ENCODE measurements at regions of chr2 and their contacts with region 1.

Region 1: GRCh38 chr2:27890146-27890923 is at the starts of genes BABAM2 and RBKS:
- DNase-seq: peak; percentile 86 to 97 (median 93)
- ATAC-seq: peak; percentile 79
- H3K4me3 ChIP-seq: peak within 1 kb of the TSS; percentile 77 to 95
- H3K4me3 Mint-ChIP-seq: peak within 1 kb of the TSS; percentile 94
- H3K27ac ChIP-seq: peak within 1 kb of the TSS; percentile 98 to 100
- H3K27ac Mint-ChIP-seq: peak within 1 kb of the TSS; percentile 100
- H3K4me1 ChIP-seq: peaks cover 22% of the 10 kb centered on the region
- H3K4me1 Mint-ChIP-seq: peaks cover 58% of the 10 kb centered on the region
- H3K27me3 ChIP-seq: no peaks in the 10 kb centered on the region
- H3K27me3 Mint-ChIP-seq: peaks cover 2% of the 10 kb centered on the region
- CTCF ChIP-seq: no peak
- total RNA-seq, gene BABAM2: 26.3 to 33.1 TPM
- total RNA-seq, gene RBKS: 5.9 to 6.3 TPM

Region 2: GRCh38 chr2:27217217-27218121 is 672.9 kb before region 1 on chr2 and contains the start of gene CAD:
- CTCF ChIA-PET with region 1: no interaction called
- POLR2A ChIA-PET with region 1: no interaction called
- intact Hi-C with region 1: loop called in 1 of 2 experiments (anchors 10 kb)
- DNase-seq: peak; percentile 69 to 92 (median 85)
- ATAC-seq: peak; percentile 77
- H3K4me3 ChIP-seq: peak within 1 kb of the TSS; percentile 84
- H3K4me3 Mint-ChIP-seq: peak within 1 kb of the TSS; percentile 96
- H3K27ac ChIP-seq: peak within 1 kb of the TSS; percentile 66 to 78
- H3K27ac Mint-ChIP-seq: peak within 1 kb of the TSS; percentile 94
- H3K4me1 ChIP-seq: peaks cover 25% of the 10 kb centered on the region
- H3K4me1 Mint-ChIP-seq: peaks cover 45% of the 10 kb centered on the region
- H3K27me3 ChIP-seq: no peaks in the 10 kb centered on the region
- H3K27me3 Mint-ChIP-seq: no peaks in the 10 kb centered on the region
- CTCF ChIP-seq: no peak
- total RNA-seq, gene CAD: 24.7 to 31.4 TPM

Region 3: DNA sequence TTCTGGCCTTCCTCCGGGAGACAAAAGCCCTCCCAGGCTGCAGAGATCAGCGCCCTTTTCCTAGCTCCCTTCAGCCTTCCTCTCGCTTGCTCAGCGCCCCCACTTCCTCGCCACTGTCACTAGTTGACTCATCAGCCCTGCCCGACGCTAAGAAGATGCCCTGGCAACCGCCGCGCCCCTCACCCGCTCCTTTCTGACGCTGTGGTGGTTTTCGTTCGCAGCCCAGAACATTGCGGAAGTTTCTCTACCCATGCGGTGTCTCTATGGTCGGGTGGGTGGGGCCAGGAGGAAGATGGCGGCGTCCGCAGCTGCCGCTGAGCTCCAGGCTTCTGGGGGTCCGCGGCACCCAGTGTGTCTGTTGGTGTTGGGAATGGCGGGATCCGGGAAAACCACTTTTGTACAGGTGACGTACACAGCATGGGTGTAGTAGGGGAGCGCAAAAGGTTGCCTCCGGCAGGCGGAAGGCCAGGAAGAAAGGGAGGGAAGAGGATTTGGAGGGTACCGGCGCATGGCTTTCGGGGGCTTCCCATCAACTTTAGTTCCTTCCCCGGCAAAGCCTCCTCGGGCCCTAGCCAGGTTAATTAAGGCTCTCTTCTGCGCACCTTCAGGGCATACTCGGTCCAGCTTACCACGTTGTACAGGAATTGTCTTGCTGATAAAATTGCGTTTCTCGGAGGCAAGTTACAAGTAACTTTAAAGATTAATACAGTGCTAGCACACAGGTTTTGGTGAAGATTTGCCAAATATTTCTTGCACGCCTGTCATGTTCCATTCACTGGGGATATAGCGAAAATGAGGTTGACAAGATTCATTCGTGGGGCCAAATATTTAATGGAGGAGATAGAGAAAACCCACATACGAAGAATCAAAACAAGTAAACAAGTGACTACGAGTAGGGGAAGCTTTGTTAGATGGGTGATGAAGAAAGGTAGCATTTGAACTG is 261.3 kb before region 1 on chr2 and contains the starts of genes CCDC121 and GPN1:
- CTCF ChIA-PET with region 1: no interaction called
- POLR2A ChIA-PET with region 1: no interaction called
- intact Hi-C with region 1: loop called in 1 of 2 experiments (anchors 2 kb)
- DNase-seq: peak; percentile 88 to 97 (median 95)
- ATAC-seq: peak; percentile 98
- H3K4me3 ChIP-seq: peak within 1 kb of the TSS; percentile 94 to 98
- H3K4me3 Mint-ChIP-seq: no peak within 1 kb of the TSS
- H3K27ac ChIP-seq: peak within 1 kb of the TSS; percentile 84 to 91
- H3K27ac Mint-ChIP-seq: peak within 1 kb of the TSS; percentile 46
- H3K4me1 ChIP-seq: peaks cover 18% of the 10 kb centered on the region
- H3K4me1 Mint-ChIP-seq: peaks cover 20% of the 10 kb centered on the region
- H3K27me3 ChIP-seq: no peaks in the 10 kb centered on the region
- H3K27me3 Mint-ChIP-seq: no peaks in the 10 kb centered on the region
- CTCF ChIP-seq: no peak
- total RNA-seq, gene CCDC121: 0.92 to 1.4 TPM
- total RNA-seq, gene GPN1: 40.6 to 41.7 TPM

Region 4: DNA sequence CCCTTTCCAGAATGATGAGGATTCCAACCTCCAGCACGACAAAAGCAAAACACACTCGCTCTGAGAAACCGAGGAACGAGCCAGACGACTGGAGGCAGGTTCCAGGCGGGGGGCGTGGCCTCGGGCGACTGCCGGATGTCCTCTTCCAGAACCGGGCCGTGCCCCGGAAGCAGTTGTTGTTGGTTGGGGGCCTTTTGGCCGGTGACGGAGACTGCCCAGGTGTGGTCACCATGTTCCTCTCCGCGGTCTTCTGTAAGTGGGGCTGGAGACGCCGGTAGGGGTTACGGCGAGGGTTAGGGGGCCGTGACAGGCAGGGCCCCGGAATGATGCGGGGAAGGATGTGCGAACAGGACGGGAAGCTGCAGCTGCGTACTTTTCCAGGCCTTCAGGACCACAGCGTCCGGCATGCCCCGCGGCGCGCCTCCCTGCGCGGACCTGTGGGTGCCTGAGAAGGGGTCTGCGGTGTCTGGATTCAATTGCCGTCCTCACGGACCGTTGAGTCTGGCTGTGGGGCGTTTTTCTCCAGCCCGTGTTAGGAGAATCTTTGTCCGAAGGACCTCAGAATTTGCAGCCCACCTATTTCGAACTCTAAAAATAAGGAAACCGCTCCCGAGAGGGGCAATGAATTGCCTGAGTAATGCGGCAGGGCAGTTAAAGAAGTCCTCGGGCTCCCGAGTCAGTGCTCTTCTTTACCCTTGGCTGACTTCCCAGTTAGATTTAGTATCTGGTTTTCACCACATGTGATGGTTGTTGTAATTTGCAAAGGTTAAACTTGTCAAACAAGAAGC is 118.6 kb before region 1 on chr2 and contains the start of gene MRPL33:
- CTCF ChIA-PET with region 1: no interaction called
- POLR2A ChIA-PET with region 1: interaction called, 6 read pairs
- intact Hi-C with region 1: loop called (anchors 1 kb)
- DNase-seq: peak; percentile 82 to 94 (median 92)
- ATAC-seq: peak; percentile 89
- H3K4me3 ChIP-seq: peak within 1 kb of the TSS; percentile 93 to 99
- H3K4me3 Mint-ChIP-seq: peak within 1 kb of the TSS; percentile 100
- H3K27ac ChIP-seq: peak within 1 kb of the TSS; percentile 93 to 96
- H3K27ac Mint-ChIP-seq: peak within 1 kb of the TSS; percentile 100
- H3K4me1 ChIP-seq: peaks cover 27% of the 10 kb centered on the region
- H3K4me1 Mint-ChIP-seq: peaks cover 51% of the 10 kb centered on the region
- H3K27me3 ChIP-seq: no peaks in the 10 kb centered on the region
- H3K27me3 Mint-ChIP-seq: peaks cover 4% of the 10 kb centered on the region
- CTCF ChIP-seq: no peak
- total RNA-seq, gene MRPL33: 35.8 to 39.0 TPM

Region 5: DNA sequence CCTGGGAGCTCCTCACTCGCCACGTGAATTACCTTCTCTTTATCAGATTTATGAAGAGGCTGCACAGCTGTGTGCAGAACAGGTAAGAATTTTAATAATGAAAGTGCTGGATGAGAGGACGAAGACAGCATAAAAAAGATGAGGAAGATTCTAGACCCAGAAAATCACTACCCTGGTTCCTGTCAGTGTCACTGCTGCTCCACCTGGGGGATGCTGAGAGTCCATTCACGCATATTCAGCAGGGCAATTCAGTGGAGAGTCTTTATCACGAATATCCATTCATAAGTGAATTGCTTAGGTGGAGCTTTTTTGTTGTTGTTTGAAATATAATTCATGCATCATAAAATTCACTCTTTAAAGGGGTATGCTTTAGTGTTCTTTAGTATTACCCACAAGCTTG is 66.8 kb before region 1 on chr2:
- CTCF ChIA-PET with region 1: no interaction called
- POLR2A ChIA-PET with region 1: no interaction called
- intact Hi-C with region 1: no loop called
- DNase-seq: no peak
- ATAC-seq: no peak
- H3K4me3 ChIP-seq: no peak overlapping the region
- H3K4me3 Mint-ChIP-seq: no peak overlapping the region
- H3K27ac ChIP-seq: no peak overlapping the region
- H3K27ac Mint-ChIP-seq: no peak overlapping the region
- H3K4me1 ChIP-seq: no peaks in the 10 kb centered on the region
- H3K4me1 Mint-ChIP-seq: no peaks in the 10 kb centered on the region
- H3K27me3 ChIP-seq: no peaks in the 10 kb centered on the region
- H3K27me3 Mint-ChIP-seq: no peaks in the 10 kb centered on the region
- CTCF ChIP-seq: no peak

Region 6: DNA sequence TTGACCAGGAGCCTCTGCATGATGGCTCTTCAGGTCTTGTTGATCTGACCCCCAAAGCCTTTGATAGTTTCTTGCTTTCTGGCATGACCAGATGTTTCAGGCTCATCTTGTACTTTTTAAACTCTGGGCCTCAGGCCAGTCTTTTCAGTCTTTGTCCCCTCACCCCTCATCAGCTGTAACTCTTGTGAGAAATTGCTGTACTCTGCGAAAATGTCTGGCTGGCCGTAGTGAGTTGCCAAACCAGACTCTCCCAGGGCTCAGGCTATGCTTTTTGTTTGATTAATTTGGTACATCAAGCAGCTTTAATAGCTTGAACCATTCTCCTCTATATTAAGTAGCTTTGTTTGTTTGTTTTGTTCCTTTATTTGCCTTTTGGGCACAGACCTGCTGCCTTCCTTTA is 76.1 kb after region 1 on chr2:
- CTCF ChIA-PET with region 1: no interaction called
- POLR2A ChIA-PET with region 1: interaction called, 3 read pairs
- intact Hi-C with region 1: loop called (anchors 2 to 5 kb)
- DNase-seq: no peak
- ATAC-seq: no peak
- H3K4me3 ChIP-seq: no peak overlapping the region
- H3K4me3 Mint-ChIP-seq: peak overlapping the region; percentile 9
- H3K27ac ChIP-seq: no peak overlapping the region
- H3K27ac Mint-ChIP-seq: peak overlapping the region; percentile 75
- H3K4me1 ChIP-seq: peaks cover 18% of the 10 kb centered on the region
- H3K4me1 Mint-ChIP-seq: peaks cover 31% of the 10 kb centered on the region
- H3K27me3 ChIP-seq: no peaks in the 10 kb centered on the region
- H3K27me3 Mint-ChIP-seq: no peaks in the 10 kb centered on the region
- CTCF ChIP-seq: no peak

Region 7: DNA sequence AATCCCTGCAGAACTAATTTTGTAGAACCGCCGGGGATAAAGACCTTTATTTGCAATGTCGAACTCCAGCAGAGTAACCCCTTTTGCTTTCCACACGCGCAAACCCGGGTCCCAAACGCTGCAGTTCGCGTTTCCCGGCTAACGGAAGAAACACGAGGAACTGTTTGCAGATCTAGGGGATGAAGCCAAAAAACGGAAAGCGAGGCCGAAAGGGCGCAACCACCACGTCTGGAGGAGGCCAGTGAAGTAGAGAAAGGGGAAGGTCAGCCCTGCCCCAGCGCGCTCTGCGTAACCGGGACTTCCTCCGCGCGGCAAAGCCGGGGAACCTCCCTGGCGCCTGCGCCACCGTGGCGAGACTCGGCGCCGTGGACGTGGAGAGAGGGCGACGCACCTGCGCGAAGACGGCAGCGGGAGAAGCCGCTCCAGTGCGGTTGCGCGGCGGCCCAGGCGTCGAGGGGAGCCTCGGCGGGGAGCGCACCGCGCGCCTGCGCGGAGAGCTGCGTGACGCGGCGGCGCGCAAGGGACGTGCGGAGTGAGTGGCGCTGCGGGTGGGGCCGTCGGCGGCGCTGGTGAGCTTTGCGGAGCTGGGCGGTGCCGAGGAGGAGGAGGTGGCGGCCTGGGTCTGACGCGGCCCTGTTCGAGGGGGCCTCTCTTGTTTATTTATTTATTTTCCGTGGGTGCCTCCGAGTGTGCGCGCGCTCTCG is 861.1 kb after region 1 on chr2 and contains the start of gene PPP1CB:
- CTCF ChIA-PET with region 1: no interaction called
- POLR2A ChIA-PET with region 1: no interaction called
- intact Hi-C with region 1: loop called in 1 of 2 experiments (anchors 2 kb)
- DNase-seq: peak; percentile 93 to 100 (median 95)
- ATAC-seq: peak; percentile 85
- H3K4me3 ChIP-seq: peak within 1 kb of the TSS; percentile 63 to 88
- H3K4me3 Mint-ChIP-seq: peak within 1 kb of the TSS; percentile 93
- H3K27ac ChIP-seq: peak within 1 kb of the TSS; percentile 86 to 97
- H3K27ac Mint-ChIP-seq: peak within 1 kb of the TSS; percentile 96
- H3K4me1 ChIP-seq: peaks cover 46% of the 10 kb centered on the region
- H3K4me1 Mint-ChIP-seq: peaks cover 65% of the 10 kb centered on the region
- H3K27me3 ChIP-seq: no peaks in the 10 kb centered on the region
- H3K27me3 Mint-ChIP-seq: no peaks in the 10 kb centered on the region
- CTCF ChIP-seq: no peak
- total RNA-seq, gene PPP1CB: 331 to 334 TPM

Region 8: GRCh38 chr2:29014811-29015421 is 1124.6 kb after region 1 on chr2:
- CTCF ChIA-PET with region 1: no interaction called
- POLR2A ChIA-PET with region 1: no interaction called
- intact Hi-C with region 1: loop called in 1 of 2 experiments (anchors 5 kb)
- DNase-seq: peak; percentile 46 to 93 (median 82)
- ATAC-seq: peak; percentile 57
- H3K4me3 ChIP-seq: peak overlapping the region; percentile 27 to 37
- H3K4me3 Mint-ChIP-seq: peak overlapping the region; percentile 75
- H3K27ac ChIP-seq: peak overlapping the region; percentile 85 to 98
- H3K27ac Mint-ChIP-seq: peak overlapping the region; percentile 99
- H3K4me1 ChIP-seq: peaks cover 72% of the 10 kb centered on the region
- H3K4me1 Mint-ChIP-seq: peaks cover 76% of the 10 kb centered on the region
- H3K27me3 ChIP-seq: no peaks in the 10 kb centered on the region
- H3K27me3 Mint-ChIP-seq: no peaks in the 10 kb centered on the region
- CTCF ChIP-seq: peak; percentile 63